ENCODE measurements at regions of chr7 and their contacts with region 1.

Region 1: GRCh38 chr7:25565949-25566348 is 337.7 kb upstream of the NPVF start:
- DNase-seq: peak; percentile 57
- CTCF ChIP-seq: peak; percentile 100

Region 2: GRCh38 chr7:25259587-25260243 is 306.2 kb before region 1 on chr7:
- CTCF ChIA-PET with region 1: interaction called, 66 read pairs
- POLR2A ChIA-PET with region 1: no interaction called
- DNase-seq: peak; percentile 52
- CTCF ChIP-seq: peak; percentile 72

Region 3: GRCh38 chr7:25389489-25390106 is 176.4 kb before region 1 on chr7:
- CTCF ChIA-PET with region 1: interaction called, 72 read pairs
- POLR2A ChIA-PET with region 1: no interaction called
- DNase-seq: peak; percentile 21
- CTCF ChIP-seq: no peak

Region 4: GRCh38 chr7:25578991-25579777 is 13.2 kb after region 1 on chr7:
- CTCF ChIA-PET with region 1: interaction called, 24 read pairs
- POLR2A ChIA-PET with region 1: no interaction called
- DNase-seq: no peak
- CTCF ChIP-seq: no peak

Region 5: DNA sequence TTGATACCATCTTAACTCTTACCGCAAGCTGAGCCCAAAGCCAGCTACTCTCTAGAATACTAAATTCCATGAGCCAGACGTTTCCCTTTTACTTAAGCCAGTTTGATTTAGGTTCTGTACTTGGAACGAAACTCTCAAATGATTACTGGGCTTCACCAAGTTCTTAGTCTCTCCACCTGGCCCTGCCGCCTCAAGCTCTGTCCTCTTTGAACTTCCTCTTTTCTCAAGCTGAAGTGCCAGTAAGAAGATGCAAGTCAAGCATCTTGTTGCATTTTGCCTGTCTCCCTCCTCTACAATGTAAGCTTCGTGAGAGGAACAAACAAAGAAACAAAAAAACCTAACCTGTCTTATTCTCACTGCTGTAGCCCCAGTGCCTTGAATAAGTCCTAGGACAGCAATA is 20.6 kb after region 1 on chr7:
- CTCF ChIA-PET with region 1: interaction called, 15 read pairs
- POLR2A ChIA-PET with region 1: no interaction called
- DNase-seq: no peak
- CTCF ChIP-seq: no peak

Region 6: DNA sequence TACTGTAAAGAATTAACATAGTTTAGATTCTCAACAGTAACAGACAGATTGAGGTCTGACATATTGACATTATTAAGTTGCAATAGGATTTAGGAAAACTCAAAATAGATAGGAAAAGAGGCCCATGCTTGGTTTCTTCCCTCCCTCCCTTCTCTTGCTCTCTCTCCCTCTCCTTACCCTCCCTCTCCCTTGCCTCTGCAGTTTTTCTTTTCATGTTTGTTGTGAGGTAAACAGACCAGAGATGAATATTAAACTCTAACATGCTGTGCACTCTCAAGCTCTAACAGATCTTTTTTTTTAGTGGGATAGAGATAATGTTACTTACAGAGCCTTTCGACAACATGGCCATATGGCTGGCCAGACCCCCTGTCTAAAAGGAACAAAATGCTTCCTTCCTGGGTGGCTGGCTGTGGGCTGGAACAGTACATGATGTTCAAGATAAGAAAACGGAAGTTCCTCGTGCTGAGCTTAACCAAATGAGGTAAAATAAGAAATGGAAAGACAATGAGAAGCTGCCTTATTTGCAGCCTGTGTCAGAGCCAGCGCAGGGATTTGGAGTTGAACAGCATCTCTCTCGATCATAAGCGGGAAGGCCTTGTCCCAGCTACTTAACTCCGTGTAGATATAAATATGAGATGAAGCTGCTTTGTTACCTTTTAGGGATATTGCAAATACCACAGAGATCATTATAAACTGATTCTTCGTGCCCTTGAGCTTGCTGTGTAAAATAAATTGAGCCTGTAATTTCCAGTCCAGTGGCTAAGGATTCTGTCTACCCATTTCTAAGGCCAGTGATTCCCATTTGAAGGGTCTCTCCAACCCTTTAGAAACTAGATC is 54.2 kb after region 1 on chr7:
- CTCF ChIA-PET with region 1: no interaction called
- POLR2A ChIA-PET with region 1: no interaction called
- DNase-seq: no peak
- CTCF ChIP-seq: no peak

Region 7: DNA sequence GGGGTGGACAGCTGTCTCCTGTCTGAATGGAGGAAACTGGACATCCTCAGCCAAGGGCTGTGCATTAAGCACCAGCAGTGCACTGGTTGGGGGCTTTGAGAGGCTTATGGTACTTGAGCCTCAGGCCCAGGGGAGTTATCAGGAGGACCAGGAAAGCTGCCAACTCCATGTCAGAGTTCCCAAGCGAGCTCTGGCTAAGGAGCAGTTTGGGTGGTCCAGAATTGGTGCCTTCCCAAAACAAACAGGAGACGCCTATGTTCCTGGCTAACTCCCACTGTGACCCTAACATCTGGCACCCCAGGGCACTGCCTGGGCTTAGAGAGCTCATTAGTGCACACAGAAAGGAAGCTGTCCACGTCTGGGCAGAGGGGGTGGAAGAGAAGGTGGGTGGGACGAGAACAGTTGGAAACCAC is 70.9 kb after region 1 on chr7:
- CTCF ChIA-PET with region 1: no interaction called
- POLR2A ChIA-PET with region 1: no interaction called
- DNase-seq: no peak
- CTCF ChIP-seq: no peak

Region 8: DNA sequence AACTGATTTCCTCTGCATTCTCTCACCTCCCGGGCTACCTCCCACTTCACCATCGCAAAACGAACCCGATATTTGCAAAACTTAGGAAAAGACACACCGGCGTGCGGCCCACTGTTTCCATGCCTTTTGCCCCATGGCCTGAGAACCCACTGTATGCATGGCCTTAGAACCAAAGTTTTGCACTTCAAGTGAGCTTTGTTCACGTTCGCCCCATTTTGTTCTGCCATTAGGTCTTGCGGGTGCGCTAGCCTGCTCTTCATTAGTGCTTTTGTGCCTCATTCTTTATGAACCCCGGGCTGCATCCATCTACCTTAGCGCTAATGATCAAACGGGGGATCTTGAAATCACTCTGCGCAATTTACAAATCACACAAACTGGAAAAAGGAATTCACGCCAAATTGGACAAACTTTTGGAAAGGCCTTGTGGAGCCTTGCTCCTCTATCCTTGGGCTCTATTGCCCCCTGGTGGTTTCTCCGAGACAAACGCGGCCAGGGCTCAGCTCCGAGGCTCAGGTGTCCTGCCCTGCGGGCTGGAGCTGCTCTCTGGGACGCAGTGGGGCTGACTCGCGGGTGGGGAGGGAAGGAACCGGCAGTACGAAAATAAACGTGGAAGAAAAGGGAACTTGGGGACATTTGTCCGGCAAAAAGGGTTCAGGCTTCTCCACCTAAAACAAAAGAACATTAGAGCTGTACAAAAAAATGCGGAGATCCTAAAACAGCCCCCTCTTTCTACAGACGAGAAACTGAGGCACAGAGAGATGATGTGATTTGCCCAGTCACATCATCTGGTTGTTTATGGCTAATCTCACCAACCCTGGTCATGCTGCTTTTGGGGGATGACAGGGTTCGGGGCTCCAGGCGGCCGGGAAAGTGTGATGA is 285.6 kb after region 1 on chr7:
- CTCF ChIA-PET with region 1: interaction called, 24 read pairs
- POLR2A ChIA-PET with region 1: no interaction called
- DNase-seq: peak; percentile 70
- CTCF ChIP-seq: peak; percentile 77